ENCODE measurements at regions of chr9 and their contacts with region 1.

Region 1: GRCh38 chr9:85258823-85259370 is 482.9 kb downstream of the AGTPBP1 start:
- DNase-seq: peak; percentile 69
- H3K4me3 ChIP-seq: no peak overlapping the region
- H3K27ac ChIP-seq: no peak overlapping the region
- H3K4me1 ChIP-seq: no peaks in the 10 kb centered on the region
- H3K27me3 ChIP-seq: peaks cover 2% of the 10 kb centered on the region
- CTCF ChIP-seq: peak; percentile 87 to 98

Region 2: DNA sequence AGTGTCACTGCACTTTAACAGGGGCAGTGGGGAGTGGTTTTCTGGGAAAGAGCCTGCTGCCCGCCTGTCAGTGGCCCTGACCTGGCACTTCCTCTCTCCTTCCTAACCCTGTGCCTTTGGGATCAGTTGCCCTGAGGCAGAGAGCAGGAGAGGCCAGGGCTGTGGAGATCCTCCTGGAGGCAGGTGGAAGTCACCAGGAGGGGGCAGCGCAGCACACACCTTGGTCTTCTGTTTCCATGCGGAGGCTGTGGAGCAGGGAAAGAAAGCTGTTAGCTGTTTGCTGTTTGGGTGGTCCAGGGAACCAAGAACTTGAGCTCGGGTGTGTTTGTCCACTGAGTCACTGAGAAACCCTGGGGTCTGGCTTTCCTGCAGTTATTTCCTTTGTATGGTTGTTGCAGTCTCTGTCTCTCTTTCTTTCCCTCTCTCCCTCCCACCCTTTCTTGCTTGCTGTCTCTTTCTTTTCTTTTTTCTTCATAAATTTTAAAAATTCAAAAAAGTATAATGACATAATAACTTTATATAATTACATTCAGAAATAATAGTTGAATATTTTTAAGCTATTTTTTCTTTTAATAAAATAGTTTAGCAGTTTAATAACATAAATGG is 561.3 kb before region 1 on chr9:
- CTCF ChIA-PET with region 1: interaction called, 3 read pairs
- dilution Hi-C with region 1: no loop called
- in situ Hi-C with region 1: loop called in 1 of 2 experiments (anchors 5 kb)
- intact Hi-C with region 1: loop called (anchors 1 kb)
- DNase-seq: peak; percentile 51
- H3K4me3 ChIP-seq: no peak overlapping the region
- H3K27ac ChIP-seq: no peak overlapping the region
- H3K4me1 ChIP-seq: peaks cover 4% of the 10 kb centered on the region
- H3K27me3 ChIP-seq: peaks cover 1% of the 10 kb centered on the region
- CTCF ChIP-seq: peak; percentile 78 to 94

Region 3: DNA sequence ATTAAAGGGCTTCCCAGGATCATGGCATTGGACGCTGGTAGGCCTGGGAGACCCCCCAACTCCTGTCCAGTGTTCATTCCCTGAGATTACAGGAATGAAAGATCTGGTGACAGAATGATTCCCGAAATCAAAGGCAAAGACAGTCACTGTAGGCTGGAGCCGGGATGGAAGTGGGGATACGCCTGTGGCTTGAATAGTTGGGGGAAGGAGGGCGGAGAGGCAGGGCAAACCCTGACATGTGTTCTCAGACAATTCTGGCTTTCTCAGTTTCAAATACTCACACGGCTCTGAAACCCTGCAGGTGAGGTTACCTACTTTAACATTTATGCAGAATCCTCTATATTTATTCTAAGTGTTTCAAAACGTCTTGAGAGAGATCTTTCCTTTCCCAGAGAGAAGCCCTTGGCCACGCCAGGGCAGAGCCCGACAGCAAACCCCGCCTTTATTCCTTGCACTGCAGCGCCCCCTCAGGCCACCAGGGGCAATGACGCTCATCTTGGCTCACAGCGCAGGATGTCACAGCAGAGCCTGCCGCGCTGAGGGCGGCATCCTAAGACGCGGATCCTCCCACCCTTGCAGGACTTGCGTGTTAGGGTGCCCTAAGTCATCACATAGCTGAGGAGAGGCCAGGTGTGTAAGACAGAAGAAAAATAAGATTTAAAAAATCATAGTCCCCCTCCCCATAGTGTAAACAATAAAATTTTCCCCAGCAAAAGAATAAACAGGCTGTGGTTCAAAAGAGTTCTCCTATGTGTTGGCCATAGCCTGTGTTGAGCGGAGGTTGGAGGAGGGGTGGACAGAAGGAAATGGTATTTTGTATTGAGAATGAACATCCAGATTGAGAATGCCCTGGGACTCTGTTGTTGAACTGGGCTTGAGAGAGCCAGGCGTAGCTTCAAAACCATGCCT is 304.8 kb before region 1 on chr9:
- CTCF ChIA-PET with region 1: no interaction called
- dilution Hi-C with region 1: no loop called
- in situ Hi-C with region 1: loop called in 1 of 2 experiments (anchors 25 kb)
- intact Hi-C with region 1: loop called (anchors 5 kb)
- DNase-seq: peak; percentile 73
- H3K4me3 ChIP-seq: no peak overlapping the region
- H3K27ac ChIP-seq: peak overlapping the region; percentile 67
- H3K4me1 ChIP-seq: peaks cover 14% of the 10 kb centered on the region
- H3K27me3 ChIP-seq: no peaks in the 10 kb centered on the region
- CTCF ChIP-seq: peak; percentile 99

Region 4: DNA sequence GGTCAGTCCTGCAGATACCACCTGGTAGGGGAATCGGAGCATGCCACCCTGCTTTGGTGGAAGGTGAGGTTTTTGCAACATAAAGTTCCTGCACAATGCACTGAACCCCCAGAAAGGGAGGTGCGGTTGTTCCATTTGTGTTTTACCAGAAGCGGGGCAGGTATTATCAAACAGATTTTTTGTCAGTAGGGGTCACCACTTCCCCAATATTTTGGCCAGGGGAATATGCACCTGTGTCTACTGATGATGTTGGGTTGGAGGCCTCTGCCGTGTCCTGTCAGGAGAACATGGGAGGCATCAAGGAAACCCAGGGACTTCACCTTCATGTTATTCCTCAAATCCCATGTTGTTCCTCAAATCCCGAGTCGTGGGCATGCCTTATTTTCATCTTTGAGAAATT is 150.7 kb before region 1 on chr9:
- CTCF ChIA-PET with region 1: no interaction called
- dilution Hi-C with region 1: no loop called
- in situ Hi-C with region 1: no loop called
- intact Hi-C with region 1: loop called (anchors 1 kb)
- DNase-seq: no peak
- H3K4me3 ChIP-seq: no peak overlapping the region
- H3K27ac ChIP-seq: no peak overlapping the region
- H3K4me1 ChIP-seq: no peaks in the 10 kb centered on the region
- H3K27me3 ChIP-seq: no peaks in the 10 kb centered on the region
- CTCF ChIP-seq: peak in 1 of 2 donors; percentile 17

Region 5: GRCh38 chr9:85425153-85425611 is 166.3 kb after region 1 on chr9:
- CTCF ChIA-PET with region 1: no interaction called
- dilution Hi-C with region 1: no loop called
- in situ Hi-C with region 1: no loop called
- intact Hi-C with region 1: loop called (anchors 10 kb)
- DNase-seq: peak; percentile 27
- H3K4me3 ChIP-seq: no peak overlapping the region
- H3K27ac ChIP-seq: no peak overlapping the region
- H3K4me1 ChIP-seq: no peaks in the 10 kb centered on the region
- H3K27me3 ChIP-seq: no peaks in the 10 kb centered on the region
- CTCF ChIP-seq: peak; percentile 62 to 79

Region 6: DNA sequence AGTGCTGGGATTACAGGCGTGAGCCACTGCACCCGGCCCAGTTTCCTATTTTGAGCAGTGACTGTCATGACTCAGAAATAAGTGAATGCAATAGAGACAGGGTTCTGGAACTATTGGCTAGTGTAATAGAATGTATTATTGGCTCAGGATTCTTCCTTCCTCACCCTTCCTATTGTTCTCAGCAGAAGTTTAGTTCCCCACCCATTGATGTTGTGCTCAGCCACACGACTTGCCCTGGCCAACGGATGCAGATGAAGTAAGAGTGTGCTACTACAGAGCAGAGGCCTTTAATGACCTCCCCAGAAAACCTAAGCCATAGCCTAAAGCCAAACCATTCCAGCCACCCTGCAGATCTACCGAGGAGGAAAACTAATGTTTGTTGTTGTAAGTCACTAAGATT is 195.0 kb after region 1 on chr9:
- CTCF ChIA-PET with region 1: no interaction called
- dilution Hi-C with region 1: no loop called
- in situ Hi-C with region 1: no loop called
- intact Hi-C with region 1: no loop called
- DNase-seq: no peak
- H3K4me3 ChIP-seq: no peak overlapping the region
- H3K27ac ChIP-seq: no peak overlapping the region
- H3K4me1 ChIP-seq: no peaks in the 10 kb centered on the region
- H3K27me3 ChIP-seq: no peaks in the 10 kb centered on the region
- CTCF ChIP-seq: no peak

Measured in mammary epithelial cell (primary cell).